ENCODE measurements at regions of chr3 and their contacts with region 1.

Region 1: GRCh38 chr3:86563400-86563970 is 427.5 kb downstream of the VGLL3 start:
- DNase-seq: peak; percentile 77
- ATAC-seq: peak; percentile 51
- H3K4me3 ChIP-seq: no peak overlapping the region
- H3K27ac ChIP-seq: no peak overlapping the region
- H3K4me1 ChIP-seq: no peaks in the 10 kb centered on the region
- H3K27me3 ChIP-seq: peaks cover 6% of the 10 kb centered on the region; the same call in 1 of the 2 replicates
- CTCF ChIP-seq: peak; percentile 88

Region 2: GRCh38 chr3:85821130-85821756 is 742.2 kb before region 1 on chr3:
- CTCF ChIA-PET with region 1: no interaction called
- POLR2A ChIA-PET with region 1: no interaction called
- intact Hi-C with region 1: loop called (anchors 2 kb)
- DNase-seq: peak; percentile 69
- ATAC-seq: peak; percentile 99
- H3K4me3 ChIP-seq: no peak overlapping the region
- H3K27ac ChIP-seq: no peak overlapping the region
- H3K4me1 ChIP-seq: no peaks in the 10 kb centered on the region
- H3K27me3 ChIP-seq: peaks cover 24% of the 10 kb centered on the region
- CTCF ChIP-seq: peak; percentile 87

Region 3: GRCh38 chr3:86180696-86181095 is 382.8 kb before region 1 on chr3:
- CTCF ChIA-PET with region 1: interaction called, 5 read pairs
- POLR2A ChIA-PET with region 1: no interaction called
- intact Hi-C with region 1: loop called (anchors 1 kb)
- DNase-seq: peak; percentile 68
- ATAC-seq: peak; percentile 98
- H3K4me3 ChIP-seq: no peak overlapping the region
- H3K27ac ChIP-seq: no peak overlapping the region
- H3K4me1 ChIP-seq: no peaks in the 10 kb centered on the region
- H3K27me3 ChIP-seq: no peaks in the 10 kb centered on the region
- CTCF ChIP-seq: peak; percentile 65

Region 4: GRCh38 chr3:86245360-86245759 is 318.1 kb before region 1 on chr3:
- CTCF ChIA-PET with region 1: no interaction called
- POLR2A ChIA-PET with region 1: no interaction called
- intact Hi-C with region 1: loop called (anchors 1 kb)
- DNase-seq: peak; percentile 42
- ATAC-seq: peak; percentile 71
- H3K4me3 ChIP-seq: no peak overlapping the region
- H3K27ac ChIP-seq: no peak overlapping the region
- H3K4me1 ChIP-seq: 0 out of 2 replicates have a peak, but pooled peaks cover 3% of the 10 kb centered on the region
- H3K27me3 ChIP-seq: no peaks in the 10 kb centered on the region
- CTCF ChIP-seq: peak; percentile 63

Region 5: DNA sequence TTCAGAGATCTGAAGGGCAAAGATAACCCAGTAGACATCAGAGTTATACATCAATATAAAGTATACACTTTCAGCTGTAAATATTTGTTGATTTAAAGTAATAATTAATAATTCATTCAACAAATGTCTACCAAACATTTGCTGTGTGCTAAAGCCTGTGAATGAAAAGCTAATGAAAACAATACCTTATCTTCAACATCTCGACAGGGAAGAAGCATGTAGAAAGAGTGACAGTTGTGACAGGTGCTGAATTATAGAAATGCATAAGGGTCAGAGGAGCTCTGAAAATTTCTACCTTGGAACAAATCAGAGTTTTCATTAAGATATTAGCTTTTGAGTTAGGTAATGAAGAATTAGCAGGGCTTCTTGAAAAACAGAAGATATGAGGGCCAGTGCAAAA is 311.7 kb before region 1 on chr3:
- CTCF ChIA-PET with region 1: no interaction called
- POLR2A ChIA-PET with region 1: no interaction called
- intact Hi-C with region 1: loop called (anchors 2 kb)
- DNase-seq: no peak
- ATAC-seq: no peak
- H3K4me3 ChIP-seq: no peak overlapping the region
- H3K27ac ChIP-seq: no peak overlapping the region
- H3K4me1 ChIP-seq: 0 out of 2 replicates have a peak, but pooled peaks cover 3% of the 10 kb centered on the region
- H3K27me3 ChIP-seq: no peaks in the 10 kb centered on the region
- CTCF ChIP-seq: no peak

Region 6: GRCh38 chr3:86333636-86334035 is 229.8 kb before region 1 on chr3:
- CTCF ChIA-PET with region 1: no interaction called
- POLR2A ChIA-PET with region 1: no interaction called
- intact Hi-C with region 1: no loop called
- DNase-seq: no peak
- ATAC-seq: no peak
- H3K4me3 ChIP-seq: no peak overlapping the region
- H3K27ac ChIP-seq: no peak overlapping the region
- H3K4me1 ChIP-seq: no peaks in the 10 kb centered on the region
- H3K27me3 ChIP-seq: peaks cover 3% of the 10 kb centered on the region; the same call in 1 of the 2 replicates
- CTCF ChIP-seq: no peak

Region 7: GRCh38 chr3:86547697-86548096 is 15.8 kb before region 1 on chr3:
- CTCF ChIA-PET with region 1: no interaction called
- POLR2A ChIA-PET with region 1: no interaction called
- intact Hi-C with region 1: no loop called
- DNase-seq: no peak
- ATAC-seq: no peak
- H3K4me3 ChIP-seq: no peak overlapping the region
- H3K27ac ChIP-seq: no peak overlapping the region
- H3K4me1 ChIP-seq: no peaks in the 10 kb centered on the region
- H3K27me3 ChIP-seq: no peaks in the 10 kb centered on the region; the same call in 1 of the 2 replicates
- CTCF ChIP-seq: no peak

Region 8: GRCh38 chr3:86890741-86891396 is 327.4 kb after region 1 on chr3:
- CTCF ChIA-PET with region 1: no interaction called
- POLR2A ChIA-PET with region 1: no interaction called
- intact Hi-C with region 1: no loop called
- DNase-seq: no peak
- ATAC-seq: no peak
- H3K4me3 ChIP-seq: no peak overlapping the region
- H3K27ac ChIP-seq: no peak overlapping the region
- H3K4me1 ChIP-seq: peaks cover 8% of the 10 kb centered on the region
- H3K27me3 ChIP-seq: no peaks in the 10 kb centered on the region
- CTCF ChIP-seq: no peak